Endothelial cell of umbilical vein (primary cell): ENCODE measurements at regions of chr19 and their contacts with region 1.

Region 1: DNA sequence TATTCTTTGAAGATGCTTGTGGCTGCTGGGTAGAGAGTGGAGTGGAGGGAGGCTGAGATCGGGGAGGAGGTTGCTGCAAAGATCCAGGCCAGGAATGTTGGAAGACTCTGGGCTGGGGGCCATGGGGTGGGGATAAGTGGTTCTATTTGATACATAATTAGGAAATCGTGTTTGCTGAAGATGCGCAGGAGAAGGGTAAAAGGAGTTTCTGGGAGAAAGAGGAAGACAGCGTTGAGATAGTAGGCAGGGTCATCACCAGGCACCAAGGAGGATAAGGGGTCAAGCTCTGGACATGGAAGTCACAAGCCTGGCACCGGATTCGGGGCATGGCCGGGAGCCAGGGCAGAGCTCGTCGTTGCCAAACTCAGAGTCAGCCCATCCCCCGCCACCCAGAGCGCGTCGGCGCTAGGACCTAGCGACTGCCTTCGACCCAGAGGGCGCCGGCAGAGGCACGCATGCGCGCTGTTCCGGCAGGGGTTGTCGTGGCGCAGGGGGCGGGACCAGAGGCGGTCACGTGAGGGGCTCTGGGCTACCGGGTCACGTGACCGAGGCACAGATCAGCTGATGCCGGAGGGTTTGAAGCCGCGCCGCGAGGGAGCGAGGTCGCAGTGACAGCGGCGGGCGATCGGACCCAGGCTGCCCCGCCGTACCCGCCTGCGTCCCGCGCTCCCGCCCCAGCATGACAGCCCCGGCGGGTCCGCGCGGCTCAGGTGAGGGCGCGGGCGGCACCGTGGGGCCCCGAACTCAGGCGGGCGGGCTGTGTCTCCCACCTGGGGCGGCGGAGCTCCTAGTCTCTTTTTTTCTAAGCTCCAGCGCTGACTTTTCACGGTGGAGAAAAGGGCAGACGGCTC is at the start of gene MCOLN1:
- DNase-seq: peak; percentile 97
- H3K4me3 ChIP-seq: peak within 1 kb of the TSS; percentile 64 to 94 (median 81)
- H3K27ac ChIP-seq: peak within 1 kb of the TSS; percentile 4
- H3K4me1 ChIP-seq: peaks cover 16% of the 10 kb centered on the region
- H3K27me3 ChIP-seq: no peaks in the 10 kb centered on the region
- CTCF ChIP-seq: no peak
- POLR2A ChIP-seq: peak; percentile 73
- total RNA-seq, gene MCOLN1: 23.0 and 26.9 TPM in 2 replicates

Region 2: DNA sequence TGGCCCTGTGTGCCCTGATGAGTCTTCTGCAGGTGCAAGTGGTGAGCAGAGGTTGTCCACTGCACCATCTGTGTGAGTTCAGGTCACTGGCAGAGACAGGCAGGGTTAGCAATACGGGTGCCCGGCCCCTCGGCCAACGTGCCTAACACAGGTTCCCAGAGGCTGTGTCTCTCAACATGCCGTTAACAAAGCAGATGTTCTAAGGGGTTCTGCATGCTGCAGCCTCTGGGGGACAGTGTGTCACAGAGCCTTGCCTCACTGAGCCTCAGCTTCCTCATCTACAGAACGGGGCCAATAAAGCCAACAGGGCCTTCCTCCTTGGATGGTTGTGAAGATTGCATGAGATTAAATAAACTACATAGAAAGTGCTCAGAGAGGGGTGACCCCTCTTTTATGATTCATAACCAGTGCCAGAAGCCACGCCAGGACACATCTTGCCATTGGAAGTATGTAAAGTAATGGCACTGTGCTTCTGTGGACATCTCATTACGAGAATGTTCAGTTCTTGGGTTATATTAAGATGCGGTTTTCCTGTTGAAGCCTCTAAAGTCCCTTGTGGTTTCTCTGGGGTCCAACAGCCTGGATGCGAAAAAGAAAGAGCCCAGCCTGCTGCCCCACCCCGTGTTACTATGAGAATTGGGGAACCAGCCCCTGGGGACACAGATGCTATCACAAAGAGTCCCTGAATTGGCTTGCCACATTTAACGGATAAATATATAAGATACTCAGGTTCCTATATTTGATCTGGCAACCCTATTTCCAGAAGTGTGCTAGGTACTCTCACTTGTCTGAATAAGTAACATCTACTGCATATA is 184.7 kb before region 1 on chr19:
- CTCF ChIA-PET with region 1: no interaction called
- POLR2A ChIA-PET with region 1: no interaction called
- dilution Hi-C with region 1: no loop called
- intact Hi-C with region 1: no loop called
- DNase-seq: no peak
- H3K4me3 ChIP-seq: no peak overlapping the region
- H3K27ac ChIP-seq: no peak overlapping the region
- H3K4me1 ChIP-seq: no peaks in the 10 kb centered on the region
- H3K27me3 ChIP-seq: no peaks in the 10 kb centered on the region
- CTCF ChIP-seq: no peak
- POLR2A ChIP-seq: no peak

Region 3: GRCh38 chr19:7460562-7460966 is 61.7 kb before region 1 on chr19:
- CTCF ChIA-PET with region 1: no interaction called
- POLR2A ChIA-PET with region 1: no interaction called
- dilution Hi-C with region 1: no loop called
- intact Hi-C with region 1: no loop called
- DNase-seq: no peak
- H3K4me3 ChIP-seq: no peak overlapping the region
- H3K27ac ChIP-seq: no peak overlapping the region
- H3K4me1 ChIP-seq: no peaks in the 10 kb centered on the region
- H3K27me3 ChIP-seq: no peaks in the 10 kb centered on the region
- CTCF ChIP-seq: no peak
- POLR2A ChIP-seq: no peak

Region 4: GRCh38 chr19:7488736-7489353 is 33.5 kb before region 1 on chr19 and contains the start of gene PEX11G:
- CTCF ChIA-PET with region 1: no interaction called
- POLR2A ChIA-PET with region 1: no interaction called
- dilution Hi-C with region 1: no loop called
- intact Hi-C with region 1: loop called (anchors 5 kb)
- DNase-seq: peak; percentile 91
- H3K4me3 ChIP-seq: peak within 1 kb of the TSS; percentile 32 to 67 (median 45)
- H3K27ac ChIP-seq: peak within 1 kb of the TSS; percentile 68
- H3K4me1 ChIP-seq: peaks cover 18% of the 10 kb centered on the region
- H3K27me3 ChIP-seq: no peaks in the 10 kb centered on the region
- CTCF ChIP-seq: no peak
- POLR2A ChIP-seq: peak; percentile 91
- total RNA-seq, gene PEX11G: 1.3 and 1.6 TPM in 2 replicates

Region 5: GRCh38 chr19:7497292-7497691 is 25.0 kb before region 1 on chr19:
- CTCF ChIA-PET with region 1: interaction called, 11 read pairs
- POLR2A ChIA-PET with region 1: interaction called, 3 read pairs
- dilution Hi-C with region 1: no loop called
- intact Hi-C with region 1: no loop called
- DNase-seq: no peak
- H3K4me3 ChIP-seq: no peak overlapping the region
- H3K27ac ChIP-seq: no peak overlapping the region
- H3K4me1 ChIP-seq: peaks cover 6% of the 10 kb centered on the region
- H3K27me3 ChIP-seq: peaks cover 0 to 3% of the 10 kb centered on the region in 2 experiments
- CTCF ChIP-seq: peak; percentile 25 to 40
- POLR2A ChIP-seq: no peak